ENCODE measurements at regions of chr3 and their contacts with region 1.

Region 1: GRCh38 chr3:15478325-15478979 is 43.1 kb downstream of the COLQ start:
- DNase-seq: no peak

Region 2: DNA sequence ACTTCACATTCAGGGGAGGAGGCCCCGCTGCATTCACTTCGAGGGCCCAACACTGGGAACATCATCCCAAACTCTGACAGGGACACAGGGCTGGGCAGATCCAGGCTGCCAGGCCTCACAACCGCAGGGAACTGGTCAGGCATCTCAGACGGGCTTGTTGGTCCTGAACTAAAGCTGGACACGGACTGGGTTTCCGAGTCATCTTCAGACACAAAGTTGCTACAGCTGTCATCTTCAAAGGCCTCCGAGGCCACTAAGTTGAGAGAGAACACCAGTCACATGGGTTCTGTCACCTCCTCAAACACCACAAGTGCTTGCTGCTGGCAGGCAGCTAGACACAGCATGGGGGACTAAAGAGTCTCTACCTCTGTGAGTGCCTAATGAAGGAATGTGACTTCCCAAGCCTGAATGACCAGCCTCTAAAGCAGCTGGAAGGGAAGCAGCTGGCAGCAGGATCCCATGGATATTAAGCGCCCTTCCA is 221.6 kb before region 1 on chr3:
- intact Hi-C with region 1: no loop called
- DNase-seq: no peak

Region 3: GRCh38 chr3:15495461-15496340 is 17.2 kb after region 1 on chr3:
- intact Hi-C with region 1: loop called (anchors 2 kb)
- DNase-seq: no peak